OCI-LY7 (cell line): ENCODE measurements at regions of chr15 and their contacts with region 1.

Region 1: DNA sequence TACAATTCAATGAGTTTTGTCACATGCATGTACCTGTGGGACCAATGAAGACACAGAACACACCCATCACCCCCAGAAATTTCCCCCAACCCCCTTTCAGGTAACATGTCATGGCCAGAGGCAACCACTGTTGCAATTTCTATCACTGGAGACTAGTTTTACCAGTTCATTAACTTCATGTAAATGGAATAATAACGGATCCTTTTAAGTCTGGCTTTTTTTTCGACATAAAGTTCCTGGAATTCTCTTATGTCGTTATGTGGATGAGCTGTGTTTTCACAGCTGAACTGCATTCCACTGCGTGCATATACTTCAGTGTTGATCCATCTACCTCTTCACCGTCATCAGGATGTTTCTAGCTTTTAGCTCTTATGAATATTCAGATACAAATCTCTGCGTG is 15.5 kb upstream of the CYFIP1 start:
- DNase-seq: no peak
- H3K4me3 ChIP-seq: no peak overlapping the region
- H3K27ac ChIP-seq: no peak overlapping the region
- H3K4me1 ChIP-seq: no peaks in the 10 kb centered on the region
- CTCF ChIP-seq: no peak

Region 2: GRCh38 chr15:22944651-22945050 is 51.0 kb before region 1 on chr15:
- CTCF ChIA-PET with region 1: no interaction called
- POLR2A ChIA-PET with region 1: no interaction called
- intact Hi-C with region 1: loop called (anchors 5 kb)
- DNase-seq: no peak
- H3K4me3 ChIP-seq: no peak overlapping the region
- H3K27ac ChIP-seq: no peak overlapping the region
- H3K4me1 ChIP-seq: no peaks in the 10 kb centered on the region
- CTCF ChIP-seq: no peak